ENCODE measurements at regions of chr17 and their contacts with region 1.

Region 1: GRCh38 chr17:76408052-76408849 is 23.8 kb downstream of the SPHK1 start:
- DNase-seq: peak; percentile 84 to 88
- H3K4me3 ChIP-seq: no peak overlapping the region
- H3K27ac ChIP-seq: no peak overlapping the region
- H3K4me1 ChIP-seq: peaks cover 34 to 43% of the 10 kb centered on the region in 2 donors
- H3K27me3 ChIP-seq: no peaks in the 10 kb centered on the region
- CTCF ChIP-seq: peak; percentile 59 to 87 (median 80)
- POLR2A ChIP-seq: no peak

Region 2: GRCh38 chr17:76458580-76459490 is 50.6 kb after region 1 on chr17:
- intact Hi-C with region 1: loop called (anchors 5 kb)
- DNase-seq: peak; percentile 83 to 86
- H3K4me3 ChIP-seq: no peak overlapping the region
- H3K27ac ChIP-seq: no peak overlapping the region
- H3K4me1 ChIP-seq: no peaks in the 10 kb centered on the region
- H3K27me3 ChIP-seq: no peaks in the 10 kb centered on the region
- CTCF ChIP-seq: peak in 4 of 6 experiments; percentile 70 to 76 (median 72)
- POLR2A ChIP-seq: no peak

Region 3: DNA sequence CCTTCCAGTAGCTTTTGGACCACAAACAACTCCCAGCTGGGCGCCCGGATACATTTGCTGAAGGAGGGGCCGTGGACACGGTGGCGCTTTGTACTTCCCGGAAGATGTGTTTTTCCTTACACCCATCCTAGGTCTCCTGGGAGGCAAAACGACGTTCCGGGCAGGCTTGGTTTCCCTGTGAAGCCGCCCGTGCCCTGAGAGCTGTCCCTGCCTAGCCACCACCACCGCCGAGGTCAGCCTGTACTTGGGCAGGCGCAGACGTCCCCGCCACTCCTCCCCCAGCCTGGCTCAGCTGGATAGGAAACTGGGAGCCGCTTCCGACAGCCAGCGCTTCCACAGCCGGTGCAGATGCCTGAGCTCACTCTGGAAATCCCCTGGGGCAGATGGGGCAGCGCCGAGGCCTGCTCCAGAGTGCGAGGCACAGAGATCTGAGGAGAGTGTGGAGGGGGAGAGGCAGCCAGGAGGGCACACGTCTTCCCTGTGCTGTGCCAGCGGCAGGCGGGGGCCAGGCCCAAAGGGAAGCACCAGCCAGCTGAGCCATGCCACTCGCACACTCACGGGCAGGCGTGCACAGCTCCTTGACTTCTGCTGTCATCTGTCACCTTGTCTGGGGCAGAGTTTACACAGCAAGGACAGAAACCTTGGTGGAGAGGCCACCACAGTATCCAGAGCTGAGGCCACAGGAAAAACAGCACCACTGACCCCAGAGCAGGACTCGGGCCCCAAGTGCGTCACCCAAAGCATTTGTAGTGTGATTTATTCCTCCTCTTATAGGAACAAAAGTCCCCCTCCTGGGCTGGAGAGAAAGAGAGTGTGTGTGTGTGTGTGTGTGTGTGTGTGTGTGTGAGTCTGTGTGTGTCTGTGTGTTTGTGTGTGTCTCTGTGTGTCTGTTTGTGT is 90.0 kb after region 1 on chr17:
- intact Hi-C with region 1: loop called (anchors 5 kb)
- DNase-seq: peak; percentile 92 to 93
- H3K4me3 ChIP-seq: no peak overlapping the region
- H3K27ac ChIP-seq: peak overlapping the region; percentile 80 to 88 (median 85)
- H3K4me1 ChIP-seq: peaks cover 46 to 59% of the 10 kb centered on the region in 2 donors
- H3K27me3 ChIP-seq: no peaks in the 10 kb centered on the region
- CTCF ChIP-seq: no peak
- POLR2A ChIP-seq: peak in 1 of 2 donors; percentile 52